ENCODE measurements at regions of chr10 and their contacts with region 1.

Region 1: DNA sequence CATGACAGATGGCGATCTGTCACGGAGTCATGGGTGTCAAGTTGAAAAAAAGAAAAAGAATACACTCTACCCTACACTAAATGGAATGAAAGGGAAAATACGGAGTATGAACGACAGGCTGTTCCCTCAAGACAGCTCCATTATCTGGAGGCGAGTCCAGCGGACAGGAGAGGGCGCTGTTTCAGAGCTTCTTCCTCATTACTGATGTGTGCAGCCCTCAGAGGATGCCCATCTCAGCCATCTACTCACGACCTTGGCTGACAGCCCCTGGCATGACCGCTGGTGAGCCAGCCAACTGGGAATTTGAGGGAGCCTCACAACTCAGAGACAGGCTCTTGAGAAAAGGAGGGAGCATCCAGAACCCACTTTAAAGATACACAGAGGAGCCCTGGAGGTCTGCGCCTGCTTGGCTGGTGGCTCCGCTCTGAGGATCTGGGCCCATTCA is 49.6 kb upstream of the SMNDC1 start:
- DNase-seq: peak; percentile 93
- H3K4me3 Mint-ChIP-seq: peak overlapping the region; percentile 82
- H3K27ac Mint-ChIP-seq: peak overlapping the region; percentile 98
- H3K4me1 Mint-ChIP-seq: peaks cover 79% of the 10 kb centered on the region
- H3K27me3 Mint-ChIP-seq: no peaks in the 10 kb centered on the region

Region 2: GRCh38 chr10:110225756-110226542 is 128.4 kb before region 1 on chr10:
- CTCF ChIA-PET with region 1: no interaction called
- POLR2A ChIA-PET with region 1: no interaction called
- intact Hi-C with region 1: loop called (anchors 2 kb)
- DNase-seq: peak; percentile 92
- H3K4me3 Mint-ChIP-seq: peak overlapping the region; percentile 98
- H3K27ac Mint-ChIP-seq: peak overlapping the region; percentile 96
- H3K4me1 Mint-ChIP-seq: peaks cover 41% of the 10 kb centered on the region
- H3K27me3 Mint-ChIP-seq: no peaks in the 10 kb centered on the region

Region 3: DNA sequence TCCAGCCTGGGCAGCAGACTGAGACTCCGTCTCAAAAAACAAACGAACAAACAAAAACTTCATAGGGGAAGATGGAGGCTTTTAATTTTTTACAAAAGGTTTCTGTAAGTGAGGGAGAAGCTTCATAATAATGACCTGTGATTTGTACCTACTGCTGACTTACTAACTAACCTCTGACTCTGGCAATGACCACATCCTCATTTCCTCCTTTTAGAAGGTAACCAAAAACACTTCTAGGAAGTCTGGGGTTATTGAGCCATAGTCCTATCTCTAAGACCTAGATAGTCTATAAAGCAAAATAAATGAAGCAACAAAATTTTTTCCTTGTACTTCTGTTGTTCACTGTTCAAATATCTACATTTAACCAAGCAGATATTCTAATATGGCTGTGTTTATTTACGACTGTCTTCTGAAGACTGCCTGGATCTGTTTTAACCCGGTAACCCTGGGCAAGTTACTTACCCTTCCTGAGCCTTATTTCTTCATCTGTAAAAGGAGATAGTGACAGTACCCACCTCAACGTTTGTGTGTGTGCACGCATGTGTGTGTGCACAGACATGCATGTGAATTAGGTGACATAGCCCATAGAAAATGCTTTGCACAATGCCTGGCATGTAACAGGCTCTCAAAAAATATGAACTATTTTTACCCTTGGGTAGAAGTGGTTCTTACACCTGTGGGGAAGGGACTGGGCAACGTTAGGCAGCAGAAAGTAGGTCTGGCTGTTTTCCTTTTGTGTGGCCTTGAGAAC is 18.9 kb before region 1 on chr10:
- CTCF ChIA-PET with region 1: interaction called, 6 read pairs
- POLR2A ChIA-PET with region 1: no interaction called
- intact Hi-C with region 1: loop called (anchors 1 kb)
- DNase-seq: no peak
- H3K4me3 Mint-ChIP-seq: no peak overlapping the region
- H3K27ac Mint-ChIP-seq: peak overlapping the region; percentile 40
- H3K4me1 Mint-ChIP-seq: peaks cover 16% of the 10 kb centered on the region
- H3K27me3 Mint-ChIP-seq: peaks cover 3% of the 10 kb centered on the region

Region 4: DNA sequence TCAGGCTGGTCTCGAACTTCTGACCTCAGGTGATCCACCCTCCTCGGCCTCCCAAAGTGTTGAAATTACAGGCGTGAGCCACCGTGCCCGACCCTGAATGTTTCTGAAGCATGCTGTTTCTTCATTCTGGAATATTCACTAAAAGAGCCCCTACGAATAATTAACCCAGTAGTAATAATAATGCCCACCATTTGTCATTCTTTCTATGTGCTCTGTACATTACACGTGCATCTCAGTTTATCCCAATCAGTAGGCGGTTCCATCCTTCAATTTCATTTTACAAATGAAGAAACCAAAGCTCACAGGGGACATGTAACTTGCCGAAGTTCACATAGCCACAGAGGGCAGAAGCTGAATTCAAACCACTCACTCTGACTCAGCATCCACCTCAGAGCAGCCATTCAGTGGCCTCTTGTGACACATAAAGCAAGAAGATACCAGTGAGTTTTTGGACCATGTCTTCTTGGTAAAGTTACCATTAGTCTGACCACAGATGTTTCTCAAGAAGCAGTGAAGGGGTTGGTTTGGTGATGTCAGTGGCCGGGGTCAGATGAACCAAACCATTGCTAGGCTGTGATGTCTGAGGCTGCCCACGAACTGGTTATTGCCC is 71.4 kb after region 1 on chr10:
- CTCF ChIA-PET with region 1: interaction called, 9 read pairs
- POLR2A ChIA-PET with region 1: interaction called, 10 read pairs
- intact Hi-C with region 1: loop called (anchors 1 kb)
- DNase-seq: peak; percentile 88
- H3K4me3 Mint-ChIP-seq: peak overlapping the region; percentile 30
- H3K27ac Mint-ChIP-seq: peak overlapping the region; percentile 96
- H3K4me1 Mint-ChIP-seq: peaks cover 66% of the 10 kb centered on the region
- H3K27me3 Mint-ChIP-seq: no peaks in the 10 kb centered on the region

Region 5: DNA sequence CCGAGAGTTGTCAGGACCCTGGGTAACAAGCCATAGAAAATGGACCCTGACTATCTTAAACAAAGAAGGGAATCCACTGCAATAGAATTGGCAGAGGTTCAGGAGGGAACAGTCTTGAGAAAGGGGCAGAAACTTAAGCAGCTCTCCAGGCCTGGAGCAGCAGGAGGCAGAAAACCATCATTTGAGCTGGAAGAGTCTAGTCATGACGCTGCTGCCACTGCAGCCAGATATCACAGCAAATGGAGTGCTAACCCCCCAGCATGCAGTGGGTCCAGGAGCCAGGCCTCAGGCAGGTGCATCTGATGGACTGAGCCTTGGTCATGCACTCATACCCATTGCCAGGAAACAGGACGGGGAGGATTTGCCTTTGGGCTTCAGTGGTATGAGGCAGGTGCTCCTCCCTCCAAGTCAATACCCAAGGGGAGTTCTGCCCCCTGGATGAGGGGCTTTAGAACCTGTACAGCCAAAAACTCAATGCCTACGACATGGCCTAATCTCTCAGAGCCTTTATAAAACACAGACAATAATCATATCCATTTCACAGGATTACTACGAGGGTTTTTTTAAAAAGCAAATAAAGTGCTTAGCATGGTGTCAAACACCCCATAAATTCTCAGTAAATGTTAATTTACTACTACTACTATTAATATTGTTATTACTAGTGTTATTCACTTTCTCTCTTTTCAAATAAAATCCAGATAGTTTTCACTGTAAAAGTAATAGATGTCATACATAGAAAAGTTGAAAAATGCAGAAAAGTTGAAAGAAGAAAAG is 174.1 kb after region 1 on chr10:
- CTCF ChIA-PET with region 1: interaction called, 6 read pairs
- POLR2A ChIA-PET with region 1: no interaction called
- intact Hi-C with region 1: loop called (anchors 1 kb)
- DNase-seq: peak; percentile 25
- H3K4me3 Mint-ChIP-seq: no peak overlapping the region
- H3K27ac Mint-ChIP-seq: peak overlapping the region; percentile 85
- H3K4me1 Mint-ChIP-seq: peaks cover 66% of the 10 kb centered on the region
- H3K27me3 Mint-ChIP-seq: no peaks in the 10 kb centered on the region

Region 6: DNA sequence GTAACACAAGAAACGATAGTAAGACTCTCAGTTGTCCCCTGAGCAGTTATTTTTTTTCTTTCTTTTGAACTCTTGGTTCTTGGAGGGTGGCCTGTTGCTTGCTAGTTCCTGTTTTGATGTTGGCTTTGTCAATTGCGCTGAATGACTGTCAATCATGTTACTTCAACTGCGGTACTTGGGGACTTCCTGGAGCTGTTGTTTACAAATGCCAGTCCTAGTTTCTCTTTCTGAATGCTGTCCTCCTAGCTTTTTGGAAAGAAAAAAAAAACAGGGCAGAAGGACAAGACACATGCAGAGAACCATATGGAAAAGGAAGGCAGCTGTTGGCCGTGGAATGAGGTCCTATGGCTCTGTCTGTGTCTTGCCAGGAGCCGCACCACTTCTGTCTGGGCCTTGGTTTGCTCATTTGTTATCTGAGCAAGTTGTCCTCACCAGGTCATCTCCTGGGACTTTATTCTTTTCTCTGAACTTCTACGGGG is 510.4 kb after region 1 on chr10:
- CTCF ChIA-PET with region 1: no interaction called
- POLR2A ChIA-PET with region 1: no interaction called
- intact Hi-C with region 1: loop called (anchors 2 kb)
- DNase-seq: peak; percentile 65
- H3K4me3 Mint-ChIP-seq: peak overlapping the region; percentile 72
- H3K27ac Mint-ChIP-seq: peak overlapping the region; percentile 95
- H3K4me1 Mint-ChIP-seq: peaks cover 93% of the 10 kb centered on the region
- H3K27me3 Mint-ChIP-seq: no peaks in the 10 kb centered on the region